ENCODE measurements at regions of chr2 and their contacts with region 1.

Region 1: GRCh38 chr2:45650851-45651414 is 542 bp upstream of the PRKCE start:
- DNase-seq: peak; percentile 88
- H3K4me3 Mint-ChIP-seq: peak overlapping the region; percentile 90
- H3K27ac Mint-ChIP-seq: peak overlapping the region; percentile 94
- H3K4me1 Mint-ChIP-seq: peaks cover 28% of the 10 kb centered on the region
- H3K27me3 Mint-ChIP-seq: peaks cover 32% of the 10 kb centered on the region

Region 2: GRCh38 chr2:45567974-45568789 is 82.8 kb before region 1 on chr2:
- intact Hi-C with region 1: loop called (anchors 1 kb)
- DNase-seq: peak; percentile 10
- H3K4me3 Mint-ChIP-seq: peak overlapping the region; percentile 77
- H3K27ac Mint-ChIP-seq: peak overlapping the region; percentile 94
- H3K4me1 Mint-ChIP-seq: peaks cover 22% of the 10 kb centered on the region
- H3K27me3 Mint-ChIP-seq: no peaks in the 10 kb centered on the region